Panc1 (cell line): ENCODE measurements at regions of chr13 and their contacts with region 1.

Region 1: DNA sequence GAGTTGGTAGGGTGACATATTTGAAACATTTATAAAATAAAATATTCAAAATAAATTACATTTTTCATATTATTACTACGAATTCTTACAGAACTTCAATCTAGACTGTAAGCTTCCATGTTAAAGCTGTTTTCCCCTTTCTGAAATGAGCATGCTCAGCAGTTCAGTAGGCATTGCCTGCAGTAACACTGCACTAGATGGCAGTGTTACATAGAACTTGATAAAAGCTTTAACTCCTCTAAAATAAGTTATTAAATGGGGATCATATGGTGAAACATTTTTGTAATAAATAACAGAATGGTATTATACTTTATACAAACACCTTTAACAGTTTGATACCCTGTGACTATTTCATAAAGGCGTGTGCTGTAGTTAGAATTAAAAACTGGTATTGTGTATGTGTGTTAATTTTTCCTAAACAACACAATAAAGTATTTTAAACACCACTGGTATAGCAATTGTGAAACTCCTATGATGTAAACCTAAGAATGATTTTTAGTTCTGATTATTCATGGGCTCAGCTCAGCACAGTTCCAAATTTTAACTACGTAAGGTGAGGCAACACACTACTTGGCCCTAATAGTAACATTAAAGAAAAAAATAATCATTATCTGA is 11.6 kb upstream of the GPR18 start:
- DNase-seq: peak; percentile 2
- ATAC-seq: no peak
- H3K4me3 ChIP-seq: no peak overlapping the region
- H3K27ac ChIP-seq: no peak overlapping the region
- H3K4me1 ChIP-seq: no peaks in the 10 kb centered on the region
- H3K27me3 ChIP-seq: no peaks in the 10 kb centered on the region
- CTCF ChIP-seq: peak; percentile 35; the same call in 1 of the 2 replicates

Region 2: DNA sequence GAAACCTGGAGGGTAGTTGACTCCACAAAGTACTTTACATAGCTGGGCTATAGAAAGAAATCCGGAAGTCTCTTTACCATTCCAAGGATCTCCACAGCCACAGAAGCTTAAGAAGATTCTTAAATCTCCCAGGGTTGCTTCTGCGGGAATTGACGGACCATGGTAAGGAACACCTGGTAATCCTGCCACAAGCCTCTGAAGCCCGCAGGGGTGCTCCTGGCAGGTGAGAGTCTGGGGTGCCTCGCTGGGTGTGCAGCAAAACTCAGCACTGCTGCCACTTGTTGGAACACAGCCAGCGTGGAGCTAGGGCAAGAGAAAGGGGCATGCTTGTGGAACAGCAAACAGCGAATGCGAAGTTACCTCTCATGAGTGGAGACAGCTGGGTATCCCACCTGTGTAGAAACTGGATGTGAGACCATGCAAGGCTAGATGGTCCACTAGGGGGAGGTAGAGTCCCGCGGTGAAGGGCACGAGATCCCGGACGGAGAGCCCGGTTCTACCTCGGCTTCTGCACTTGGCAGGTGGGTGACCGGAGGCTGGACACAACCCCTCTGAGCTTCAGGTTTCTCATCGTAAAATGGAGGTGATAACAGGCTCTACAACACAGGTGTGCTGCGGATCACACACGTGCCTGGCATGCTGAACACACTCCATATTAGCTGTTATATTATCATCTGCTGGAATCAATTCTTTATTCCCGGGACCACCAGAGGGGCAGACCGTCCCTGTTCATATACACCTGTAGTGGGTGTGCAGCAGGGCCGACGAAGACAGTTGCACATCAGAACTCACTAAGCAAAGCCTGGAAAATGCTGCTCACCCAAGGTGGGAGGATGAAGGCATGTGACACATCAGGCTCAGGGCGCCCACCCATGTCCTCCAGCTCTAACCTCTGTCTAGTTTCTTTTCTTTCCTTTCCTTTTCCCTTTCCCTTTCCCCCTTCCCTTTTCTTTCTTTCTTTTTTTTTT is 93.1 kb before region 1 on chr13:
- CTCF ChIA-PET with region 1: interaction called, 5 read pairs
- POLR2A ChIA-PET with region 1: no interaction called
- in situ Hi-C with region 1: no loop called
- intact Hi-C with region 1: loop called (anchors 5 kb)
- DNase-seq: peak; percentile 46
- ATAC-seq: peak; percentile 96
- H3K4me3 ChIP-seq: no peak overlapping the region
- H3K27ac ChIP-seq: no peak overlapping the region
- H3K4me1 ChIP-seq: no peaks in the 10 kb centered on the region
- H3K27me3 ChIP-seq: no peaks in the 10 kb centered on the region; the same call in 1 of the 2 replicates
- CTCF ChIP-seq: peak; percentile 80

Region 3: DNA sequence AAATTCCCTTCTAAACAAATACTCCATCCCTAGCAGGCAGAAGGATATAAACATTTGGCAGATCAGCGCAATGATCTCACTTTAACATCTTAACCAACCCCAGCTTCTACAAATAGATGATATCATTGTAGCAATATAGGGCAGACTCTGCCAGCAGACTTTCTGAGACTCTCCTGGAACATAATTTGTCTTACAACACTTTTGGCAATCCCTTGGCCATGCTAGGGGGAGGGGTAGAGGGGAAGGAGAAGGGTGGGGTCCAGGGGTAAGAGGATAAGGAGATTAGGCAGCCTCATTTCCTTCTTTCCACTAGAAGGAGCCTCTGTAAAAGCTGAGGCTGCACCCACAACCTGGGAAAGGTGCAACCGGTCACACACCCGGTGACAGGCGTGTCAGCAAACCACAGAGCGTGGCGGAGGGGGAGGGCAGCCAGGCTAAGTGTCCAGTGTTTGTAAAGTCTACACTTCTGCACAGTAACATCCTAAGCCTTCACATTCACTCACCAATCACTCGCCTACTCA is 77.8 kb before region 1 on chr13:
- CTCF ChIA-PET with region 1: interaction called, 3 read pairs
- POLR2A ChIA-PET with region 1: interaction called, 3 read pairs
- in situ Hi-C with region 1: no loop called
- intact Hi-C with region 1: loop called (anchors 5 kb)
- DNase-seq: no peak
- ATAC-seq: no peak
- H3K4me3 ChIP-seq: no peak overlapping the region
- H3K27ac ChIP-seq: no peak overlapping the region
- H3K4me1 ChIP-seq: peaks cover 2% of the 10 kb centered on the region; the same call in 1 of the 2 replicates
- H3K27me3 ChIP-seq: no peaks in the 10 kb centered on the region
- CTCF ChIP-seq: no peak

Region 4: DNA sequence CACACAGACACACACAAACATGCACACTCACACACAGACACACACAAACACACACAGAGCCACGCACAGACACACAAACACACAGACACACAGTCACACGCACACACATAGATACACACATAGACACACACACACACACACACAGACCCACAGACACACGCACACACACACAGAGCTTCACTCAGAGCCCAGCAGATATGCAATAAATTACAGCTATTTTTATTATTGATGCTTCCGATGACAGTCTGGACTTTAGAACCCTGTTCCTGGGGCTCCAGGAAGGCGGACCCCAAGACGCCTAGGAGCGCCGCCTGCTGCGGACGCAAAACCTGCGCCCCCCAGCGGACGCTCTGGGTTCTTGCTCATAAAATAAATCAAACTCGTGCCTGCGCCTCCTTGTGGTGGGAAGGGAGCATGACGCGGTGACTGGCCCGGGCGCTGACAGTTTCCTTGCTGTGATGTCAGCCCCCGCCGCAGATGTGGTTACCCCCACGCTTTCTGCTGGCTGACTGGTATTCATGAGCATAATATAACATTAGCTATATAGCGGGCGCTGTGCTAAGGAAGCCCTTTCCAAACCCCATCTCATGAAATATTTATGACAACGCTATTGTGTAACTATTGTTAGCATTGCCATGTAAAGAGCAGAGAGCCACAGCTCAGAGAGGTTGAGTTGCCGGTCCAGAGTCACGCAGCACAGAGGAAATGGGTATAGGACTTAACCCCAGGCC is 167.1 kb after region 1 on chr13:
- CTCF ChIA-PET with region 1: no interaction called
- POLR2A ChIA-PET with region 1: no interaction called
- in situ Hi-C with region 1: no loop called
- intact Hi-C with region 1: loop called (anchors 2 kb)
- DNase-seq: peak; percentile 48
- ATAC-seq: peak; percentile 54
- H3K4me3 ChIP-seq: no peak overlapping the region
- H3K27ac ChIP-seq: no peak overlapping the region
- H3K4me1 ChIP-seq: peaks cover 5% of the 10 kb centered on the region; the same call in 1 of the 2 replicates
- H3K27me3 ChIP-seq: no peaks in the 10 kb centered on the region
- CTCF ChIP-seq: peak; percentile 97

Region 5: DNA sequence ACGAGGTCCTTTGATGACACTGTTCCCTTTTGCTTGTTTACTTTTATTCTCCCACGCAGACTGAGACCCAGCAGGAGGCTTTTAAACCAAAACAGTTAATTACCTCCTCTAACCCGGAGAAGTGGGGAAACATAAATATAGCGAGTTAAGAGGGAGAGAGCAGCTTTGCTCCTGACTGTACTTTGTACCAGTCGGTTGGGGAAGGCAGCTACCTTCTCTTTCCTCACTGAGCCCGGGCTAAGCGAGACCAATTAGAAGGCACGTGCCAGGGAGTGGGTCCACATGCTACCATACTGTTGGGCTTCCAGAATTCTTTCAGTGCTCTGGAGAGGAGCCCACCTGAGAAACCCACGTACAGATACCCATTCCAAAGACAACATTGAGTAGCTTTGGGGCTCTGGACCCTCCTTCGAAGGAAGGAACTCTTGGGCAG is 577.6 kb after region 1 on chr13:
- CTCF ChIA-PET with region 1: no interaction called
- POLR2A ChIA-PET with region 1: no interaction called
- in situ Hi-C with region 1: no loop called
- intact Hi-C with region 1: no loop called
- DNase-seq: no peak
- ATAC-seq: no peak
- H3K4me3 ChIP-seq: no peak overlapping the region
- H3K27ac ChIP-seq: no peak overlapping the region
- H3K4me1 ChIP-seq: no peaks in the 10 kb centered on the region
- H3K27me3 ChIP-seq: no peaks in the 10 kb centered on the region
- CTCF ChIP-seq: no peak